ENCODE measurements at regions of chr2 and their contacts with region 1.

Region 1: DNA sequence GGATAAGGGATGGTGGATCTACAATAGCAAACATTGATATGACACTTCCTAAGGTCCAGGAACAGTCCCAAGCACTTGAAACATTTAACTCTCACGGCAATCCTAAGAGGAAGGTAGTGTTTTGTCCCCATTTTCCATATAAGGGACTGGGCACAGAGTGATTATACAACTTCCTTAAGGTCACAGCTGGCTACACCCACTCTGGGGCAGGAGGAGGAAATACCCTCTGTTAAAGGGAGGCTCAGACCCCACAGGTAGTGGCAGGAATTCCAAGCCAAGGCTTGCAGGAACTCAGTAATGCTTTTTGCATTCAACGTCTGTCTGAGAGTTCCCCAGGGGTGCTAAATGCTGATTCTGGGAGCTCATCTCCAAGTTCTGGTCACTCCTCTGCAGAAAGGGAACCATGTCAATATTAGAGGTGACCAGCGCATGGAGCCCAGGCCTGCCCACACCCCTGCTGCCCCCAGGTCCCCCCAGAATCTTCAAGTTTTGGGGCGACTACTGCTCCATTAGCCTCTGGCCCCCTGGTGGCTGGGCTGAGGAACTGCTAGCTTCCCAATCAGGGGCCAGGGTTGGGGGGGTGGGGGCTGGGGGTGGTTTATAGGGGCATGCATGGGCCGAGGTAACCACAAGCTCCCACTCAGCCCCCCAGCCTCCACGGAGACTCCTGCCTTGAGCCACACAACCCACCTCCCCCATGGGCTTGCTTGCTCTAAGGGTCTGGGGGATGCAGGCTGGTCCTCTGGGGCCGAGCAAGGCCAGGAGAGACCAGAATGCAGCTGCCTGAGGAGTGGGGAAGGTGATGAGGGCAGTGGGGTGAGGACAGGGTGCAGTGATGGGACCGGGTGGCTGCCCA is 11.1 kb downstream of the OBSL1 start:
- DNase-seq: peak in 1 of 2 experiments; percentile 79
- H3K4me3 ChIP-seq: no peak overlapping the region
- H3K27ac ChIP-seq: peak overlapping the region; percentile 54; the same call in 1 of the 2 replicates
- H3K4me1 ChIP-seq: peaks cover 6 to 43% (median 36%) of the 10 kb centered on the region in 4 experiments
- H3K27me3 ChIP-seq: no peaks in the 10 kb centered on the region
- CTCF ChIP-seq: peak in 2 of 3 experiments; percentile 51 to 54; a peak in 3 of 4 replicates
- EP300 ChIP-seq: no peak
- POLR2A ChIP-seq: peak in 1 of 2 experiments; percentile 44; a peak in 1 of 3 replicates
- RAD21 ChIP-seq: peak; percentile 36 to 41

Region 2: DNA sequence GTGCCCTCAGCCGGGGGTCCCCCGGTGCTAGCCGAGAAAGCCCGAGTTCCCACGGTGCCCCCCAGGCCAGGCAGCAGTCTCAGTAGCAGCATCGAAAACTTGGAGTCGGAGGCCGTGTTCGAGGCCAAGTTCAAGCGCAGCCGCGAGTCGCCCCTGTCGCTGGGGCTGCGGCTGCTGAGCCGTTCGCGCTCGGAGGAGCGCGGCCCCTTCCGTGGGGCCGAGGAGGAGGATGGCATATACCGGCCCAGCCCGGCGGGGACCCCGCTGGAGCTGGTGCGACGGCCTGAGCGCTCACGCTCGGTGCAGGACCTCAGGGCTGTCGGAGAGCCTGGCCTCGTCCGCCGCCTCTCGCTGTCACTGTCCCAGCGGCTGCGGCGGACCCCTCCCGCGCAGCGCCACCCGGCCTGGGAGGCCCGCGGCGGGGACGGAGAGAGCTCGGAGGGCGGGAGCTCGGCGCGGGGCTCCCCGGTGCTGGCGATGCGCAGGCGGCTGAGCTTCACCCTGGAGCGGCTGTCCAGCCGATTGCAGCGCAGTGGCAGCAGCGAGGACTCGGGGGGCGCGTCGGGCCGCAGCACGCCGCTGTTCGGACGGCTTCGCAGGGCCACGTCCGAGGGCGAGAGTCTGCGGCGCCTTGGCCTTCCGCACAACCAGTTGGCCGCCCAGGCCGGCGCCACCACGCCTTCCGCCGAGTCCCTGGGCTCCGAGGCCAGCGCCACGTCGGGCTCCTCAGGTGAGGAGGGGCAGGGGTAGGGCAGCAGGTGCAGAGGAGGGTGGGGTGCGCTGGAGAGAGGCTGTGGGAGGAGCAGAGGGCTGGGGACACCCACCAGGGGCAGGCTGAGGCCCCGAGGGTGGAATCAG is 75.7 kb before region 1 on chr2:
- CTCF ChIA-PET with region 1: interaction called, 11 read pairs
- POLR2A ChIA-PET with region 1: interaction called, 5 read pairs
- DNase-seq: peak in 1 of 2 experiments; percentile 68
- H3K4me3 ChIP-seq: peak overlapping the region in 3 of 4 experiments; percentile 26 to 56 (median 32); a peak in 6 of 8 replicates
- H3K27ac ChIP-seq: no peak overlapping the region
- H3K4me1 ChIP-seq: peaks cover 6 to 36% (median 28%) of the 10 kb centered on the region in 4 experiments
- H3K27me3 ChIP-seq: peaks cover 20 to 49% (median 36%) of the 10 kb centered on the region in 4 experiments
- CTCF ChIP-seq: no peak; a peak in 1 of 4 replicates
- EP300 ChIP-seq: no peak
- POLR2A ChIP-seq: no peak
- RAD21 ChIP-seq: no peak

Region 3: GRCh38 chr2:219543601-219544358 is 16.5 kb before region 1 on chr2 and contains the starts of genes CHPF and TMEM198:
- CTCF ChIA-PET with region 1: interaction called, 293 read pairs
- POLR2A ChIA-PET with region 1: interaction called, 44 read pairs
- DNase-seq: peak; percentile 98
- H3K4me3 ChIP-seq: peak within 1 kb of the TSS; percentile 73 to 90 (median 80)
- H3K27ac ChIP-seq: peak within 1 kb of the TSS; percentile 19; the same call in 1 of the 2 replicates
- H3K4me1 ChIP-seq: peaks cover 2 to 13% (median 7%) of the 10 kb centered on the region in 4 experiments; a peak in 6 of 7 replicates
- H3K27me3 ChIP-seq: peaks cover 0 to 4% (median 0%) of the 10 kb centered on the region in 4 experiments; a peak in 2 of 7 replicates
- CTCF ChIP-seq: no peak
- EP300 ChIP-seq: peak in 1 of 2 experiments; percentile 88; a peak in 1 of 3 replicates
- POLR2A ChIP-seq: peak in 1 of 2 experiments; percentile 60; a peak in 2 of 3 replicates
- RAD21 ChIP-seq: no peak; a peak in 1 of 4 replicates
- total RNA-seq, gene CHPF: 62.9 and 68.1 TPM in 2 replicates
- total RNA-seq, gene TMEM198: 10.2 and 11.0 TPM in 2 replicates

Region 4: DNA sequence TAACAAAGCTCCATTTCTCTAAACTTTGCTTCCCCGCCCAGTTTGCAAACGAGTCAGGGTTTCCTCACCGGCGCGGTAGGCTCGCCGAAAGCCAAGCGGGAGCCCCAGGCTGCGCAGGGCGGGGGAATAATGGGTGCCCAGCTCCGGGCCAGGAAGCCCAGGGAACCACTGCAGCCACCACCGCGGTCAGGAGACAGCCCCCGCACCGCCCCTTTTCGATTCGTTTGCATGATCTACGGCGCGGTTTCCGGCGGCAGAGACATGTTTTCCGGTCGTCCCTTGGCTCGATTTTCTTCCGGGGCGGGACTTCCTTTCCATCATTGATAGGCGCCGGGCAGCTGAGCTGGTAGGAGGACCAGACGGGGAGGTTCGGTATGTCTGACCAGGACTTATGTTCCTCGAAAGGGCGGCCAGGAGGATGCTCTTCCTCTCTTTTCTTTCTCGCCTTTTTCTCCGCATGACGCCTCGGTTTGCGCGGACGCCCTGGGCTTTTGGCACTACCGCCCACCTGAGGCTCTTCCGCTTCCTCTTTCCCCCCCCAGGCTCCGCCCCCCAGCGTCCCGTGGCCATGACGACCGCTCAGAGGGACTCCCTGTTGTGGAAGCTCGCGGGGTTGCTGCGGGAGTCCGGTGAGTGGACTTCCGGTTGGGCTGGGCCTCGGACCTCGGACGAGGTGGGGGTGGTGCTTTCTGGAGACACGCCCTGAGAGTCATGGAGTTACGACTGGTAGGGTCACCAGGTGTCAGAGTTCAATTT is 37.5 kb after region 1 on chr2 and contains the start of gene STK11IP:
- CTCF ChIA-PET with region 1: interaction called, 143 read pairs
- POLR2A ChIA-PET with region 1: interaction called, 127 read pairs
- DNase-seq: peak; percentile 93 to 96
- H3K4me3 ChIP-seq: peak within 1 kb of the TSS; percentile 75 to 87 (median 84)
- H3K27ac ChIP-seq: peak within 1 kb of the TSS; percentile 70
- H3K4me1 ChIP-seq: peaks cover 0 to 13% (median 2%) of the 10 kb centered on the region in 4 experiments; a peak in 4 of 7 replicates
- H3K27me3 ChIP-seq: no peaks in the 10 kb centered on the region
- CTCF ChIP-seq: no peak; a peak in 1 of 4 replicates
- EP300 ChIP-seq: no peak
- POLR2A ChIP-seq: peak; percentile 77 to 94
- RAD21 ChIP-seq: 0 out of 4 replicates have a peak, but pooled peaks of 1 of the 2 experiments have one; percentile 4
- total RNA-seq, gene STK11IP: 24.1 and 29.6 TPM in 2 replicates

Region 5: GRCh38 chr2:219627103-219628100 is 67.1 kb after region 1 on chr2 and contains the start of gene SLC4A3:
- CTCF ChIA-PET with region 1: interaction called, 22 read pairs
- POLR2A ChIA-PET with region 1: no interaction called
- DNase-seq: peak in 1 of 2 experiments; percentile 65
- H3K4me3 ChIP-seq: peak within 1 kb of the TSS; percentile 31 to 85 (median 58)
- H3K27ac ChIP-seq: no peak within 1 kb of the TSS
- H3K4me1 ChIP-seq: peaks cover 0 to 12% (median 9%) of the 10 kb centered on the region in 4 experiments; a peak in 5 of 7 replicates
- H3K27me3 ChIP-seq: peaks cover 0 to 11% (median 6%) of the 10 kb centered on the region in 4 experiments; a peak in 5 of 7 replicates
- CTCF ChIP-seq: peak in 1 of 3 experiments; percentile 19; a peak in 1 of 4 replicates
- EP300 ChIP-seq: no peak
- POLR2A ChIP-seq: 0 out of 3 replicates have a peak, but pooled peaks of 1 of the 2 experiments have one; percentile 48
- RAD21 ChIP-seq: peak; percentile 5 to 10; a peak in 1 of 4 replicates
- total RNA-seq, gene SLC4A3: 6.5 and 7.4 TPM in 2 replicates

Region 6: GRCh38 chr2:219812672-219813071 is 252.4 kb after region 1 on chr2:
- CTCF ChIA-PET with region 1: no interaction called
- POLR2A ChIA-PET with region 1: no interaction called
- DNase-seq: no peak
- H3K4me3 ChIP-seq: no peak overlapping the region
- H3K27ac ChIP-seq: no peak overlapping the region
- H3K4me1 ChIP-seq: no peaks in the 10 kb centered on the region
- H3K27me3 ChIP-seq: no peaks in the 10 kb centered on the region
- CTCF ChIP-seq: no peak
- EP300 ChIP-seq: no peak
- POLR2A ChIP-seq: no peak
- RAD21 ChIP-seq: no peak

Region 7: DNA sequence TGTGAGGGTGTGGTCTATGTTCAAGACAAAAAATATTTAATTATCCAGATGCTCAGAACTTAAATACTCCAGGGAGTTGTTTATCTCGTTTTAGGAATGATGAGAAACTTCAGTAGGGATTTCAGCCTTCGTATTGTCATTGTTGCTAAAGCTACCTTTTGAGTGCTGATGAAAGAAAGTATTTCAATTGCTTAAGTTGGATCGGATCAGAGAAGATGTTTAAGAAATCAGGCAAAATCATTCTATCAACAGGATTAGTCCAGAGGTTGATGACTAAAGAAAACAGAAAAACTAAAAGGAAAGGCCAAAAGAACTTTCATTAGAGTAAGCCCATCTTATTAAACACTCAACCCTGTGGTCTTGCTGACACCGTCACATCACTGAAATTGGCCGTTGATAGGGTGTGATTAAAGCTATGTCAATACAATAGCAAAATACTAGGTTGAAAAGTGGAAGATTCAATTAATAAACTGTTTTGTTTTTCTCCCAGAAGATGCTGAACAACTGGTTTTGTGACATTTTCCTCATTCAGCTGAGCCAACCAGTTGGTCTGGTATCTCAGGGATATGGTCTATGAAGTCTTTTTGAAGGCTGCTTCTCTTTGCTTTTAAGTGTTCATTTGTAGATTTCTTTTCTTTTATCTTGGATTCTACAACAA is 618.9 kb after region 1 on chr2:
- CTCF ChIA-PET with region 1: no interaction called
- POLR2A ChIA-PET with region 1: no interaction called
- DNase-seq: no peak
- H3K4me3 ChIP-seq: no peak overlapping the region
- H3K27ac ChIP-seq: no peak overlapping the region
- H3K4me1 ChIP-seq: peaks cover 0 to 3% (median 0%) of the 10 kb centered on the region in 4 experiments; a peak in 1 of 7 replicates
- H3K27me3 ChIP-seq: no peaks in the 10 kb centered on the region
- CTCF ChIP-seq: no peak
- EP300 ChIP-seq: no peak
- POLR2A ChIP-seq: no peak
- RAD21 ChIP-seq: no peak

Measured in H1 (cell line).